ENCODE measurements at regions of chr16 and their contacts with region 1.

Region 1: DNA sequence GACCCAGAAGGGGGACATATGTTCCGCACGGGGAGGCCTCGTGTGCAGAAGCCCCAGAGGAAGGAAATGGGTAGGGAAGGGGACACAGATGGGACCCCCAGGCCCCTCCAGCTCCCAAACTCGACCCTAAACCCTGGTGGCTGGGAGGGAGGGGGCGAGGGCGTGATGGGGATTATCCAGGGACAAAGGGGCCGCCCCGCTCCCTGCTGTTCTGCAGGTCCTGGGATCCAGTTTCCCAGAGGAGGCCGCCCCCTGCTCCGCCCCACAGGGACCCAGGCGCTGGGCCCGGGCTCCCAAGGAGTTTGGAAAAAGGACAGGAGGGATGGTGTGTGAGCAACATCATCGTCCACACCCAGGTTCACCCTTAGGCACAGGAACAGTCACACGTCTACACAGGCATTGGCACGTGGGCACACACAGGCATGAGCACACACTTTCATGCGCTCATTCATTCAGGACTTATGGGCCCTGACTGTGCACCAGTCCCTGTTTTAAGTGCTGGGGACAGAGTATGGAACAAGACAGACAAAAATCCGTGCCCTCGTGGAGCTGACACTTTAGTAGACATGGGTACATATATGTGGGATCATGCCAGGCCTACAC is 12.8 kb upstream of the FBXL19 start:
- DNase-seq: no peak

Region 2: GRCh38 chr16:30867747-30868146 is 42.8 kb before region 1 on chr16:
- intact Hi-C with region 1: loop called (anchors 5 to 10 kb)
- DNase-seq: no peak

Region 3: DNA sequence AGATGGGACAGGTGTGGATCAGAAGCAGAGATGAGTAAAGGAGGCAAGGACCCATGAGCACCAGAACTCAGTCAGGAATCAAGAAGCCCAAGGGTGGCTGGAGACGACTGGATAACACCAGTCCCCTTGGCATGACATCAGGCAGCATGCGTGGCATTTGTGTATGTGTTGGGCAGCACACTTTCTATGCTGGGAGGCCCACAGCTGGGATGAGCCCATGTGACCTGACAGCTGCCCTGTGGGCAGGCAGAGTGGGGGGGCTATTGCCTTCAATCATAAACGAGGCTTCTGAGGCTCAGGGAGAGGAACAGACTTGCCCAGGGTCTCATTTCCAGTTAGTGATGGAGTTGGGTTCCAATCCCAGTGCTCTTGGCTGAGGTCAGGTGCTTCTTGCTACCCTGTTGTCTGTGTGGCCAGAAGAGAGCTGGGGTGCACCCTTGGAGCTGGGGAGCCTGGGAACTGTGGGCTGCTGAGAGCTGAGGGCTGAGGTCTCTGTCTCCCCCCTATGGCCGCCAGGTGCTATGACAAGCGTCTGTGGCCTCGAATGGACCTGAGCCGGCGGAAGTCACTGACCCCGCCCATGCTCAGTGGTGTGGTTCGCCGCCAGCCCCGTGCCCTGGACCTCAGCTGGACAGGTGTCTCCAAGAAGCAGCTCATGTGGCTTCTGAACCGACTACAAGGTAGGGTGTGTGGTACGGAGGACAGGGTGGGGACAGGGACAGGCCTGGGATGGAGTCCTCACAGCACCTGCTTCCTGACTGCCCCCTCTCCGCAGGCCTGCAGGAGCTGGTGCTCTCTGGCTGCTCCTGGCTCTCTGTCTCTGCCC is 31.3 kb after region 1 on chr16:
- intact Hi-C with region 1: no loop called
- DNase-seq: peak; percentile 93

Measured in posterior vena cava (tissue), 2 donors.